ENCODE measurements at regions of chr1 and their contacts with region 1.

Region 1: GRCh38 chr1:179761296-179761695 is 18.2 kb downstream of the FAM163A start:
- DNase-seq: peak; percentile 40
- H3K4me3 ChIP-seq: no peak overlapping the region
- H3K27ac ChIP-seq: peak overlapping the region in 1 of 2 experiments; percentile 96; a peak in 3 of 4 replicates
- H3K4me1 ChIP-seq: peaks cover 0 to 83% of the 10 kb centered on the region in 2 experiments; a peak in 2 of 4 replicates
- H3K27me3 ChIP-seq: no peaks in the 10 kb centered on the region
- CTCF ChIP-seq: no peak
- EP300 ChIP-seq: peak in 1 of 2 experiments; percentile 72; a peak in 1 of 4 replicates
- RAD21 ChIP-seq: peak; percentile 2; the same call in 1 of the 2 replicates

Region 2: DNA sequence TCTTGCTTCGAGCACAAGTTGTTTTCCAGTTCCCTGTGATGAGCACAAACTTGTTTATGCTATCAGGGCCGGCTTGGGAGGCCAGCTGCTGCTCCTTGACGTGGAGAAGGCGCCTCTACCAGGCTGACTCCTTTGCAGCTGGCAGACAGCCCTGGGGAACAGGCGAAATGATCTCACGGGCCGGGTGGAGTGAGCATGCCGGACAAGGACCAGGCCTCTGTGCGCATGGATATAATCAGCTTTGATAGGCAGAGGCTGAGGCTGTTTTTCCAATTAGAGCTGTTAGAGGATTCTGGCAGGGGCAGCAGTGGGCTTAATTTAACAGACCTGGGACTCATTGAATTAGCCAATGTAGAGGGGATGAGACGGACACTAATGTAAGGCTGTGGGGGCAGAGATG is 20.7 kb after region 1 on chr1:
- CTCF ChIA-PET with region 1: interaction called, 11 read pairs
- POLR2A ChIA-PET with region 1: interaction called, 18 read pairs
- DNase-seq: peak; percentile 83
- H3K4me3 ChIP-seq: no peak overlapping the region
- H3K27ac ChIP-seq: peak overlapping the region in 1 of 2 experiments; percentile 94; a peak in 2 of 4 replicates
- H3K4me1 ChIP-seq: peaks cover 0 to 82% of the 10 kb centered on the region in 2 experiments; a peak in 2 of 4 replicates
- H3K27me3 ChIP-seq: peaks cover 16% of the 10 kb centered on the region; the same call in 1 of the 2 replicates
- CTCF ChIP-seq: no peak
- EP300 ChIP-seq: peak in 1 of 2 experiments; percentile 100; a peak in 2 of 4 replicates
- RAD21 ChIP-seq: peak; percentile 53

Measured in SK-N-SH (cell line).